Calu3 (cell line): ENCODE measurements at regions of chrX and their contacts with region 1.

Region 1: DNA sequence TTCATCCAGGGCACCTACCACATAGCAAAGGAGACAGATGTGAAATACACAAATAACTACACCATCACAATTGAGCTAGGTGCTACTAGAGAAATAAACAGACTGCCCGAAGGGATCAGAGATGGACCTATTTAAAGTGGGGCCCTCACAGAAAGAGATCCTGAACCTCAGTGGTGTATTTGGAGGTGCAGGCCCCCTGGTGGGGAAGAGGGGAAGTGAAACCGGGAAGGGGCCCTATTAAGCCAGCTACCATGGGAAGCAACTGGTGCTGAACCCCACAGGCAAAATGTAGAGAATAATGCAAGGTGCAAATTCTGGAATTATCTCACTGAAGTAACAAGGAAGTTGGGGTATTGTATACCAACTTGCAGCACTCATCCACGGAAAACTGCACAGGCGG is 78.6 kb upstream of the FAM9A start:
- DNase-seq: peak; percentile 63
- H3K4me3 Mint-ChIP-seq: no peak overlapping the region
- H3K27ac Mint-ChIP-seq: no peak overlapping the region
- H3K4me1 Mint-ChIP-seq: no peaks in the 10 kb centered on the region
- H3K27me3 Mint-ChIP-seq: no peaks in the 10 kb centered on the region
- CTCF ChIP-seq: peak; percentile 60

Region 2: GRCh38 chrX:8823698-8824097 is 56.1 kb before region 1 on chrX:
- CTCF ChIA-PET with region 1: interaction called, 4 read pairs
- intact Hi-C with region 1: loop called (anchors 2 kb)
- DNase-seq: no peak
- H3K4me3 Mint-ChIP-seq: no peak overlapping the region
- H3K27ac Mint-ChIP-seq: no peak overlapping the region
- H3K4me1 Mint-ChIP-seq: peaks cover 28% of the 10 kb centered on the region
- H3K27me3 Mint-ChIP-seq: no peaks in the 10 kb centered on the region
- CTCF ChIP-seq: no peak